Lower leg skin (tissue), 4 donors: ENCODE measurements at regions of chr17 and their contacts with region 1.

Region 1: DNA sequence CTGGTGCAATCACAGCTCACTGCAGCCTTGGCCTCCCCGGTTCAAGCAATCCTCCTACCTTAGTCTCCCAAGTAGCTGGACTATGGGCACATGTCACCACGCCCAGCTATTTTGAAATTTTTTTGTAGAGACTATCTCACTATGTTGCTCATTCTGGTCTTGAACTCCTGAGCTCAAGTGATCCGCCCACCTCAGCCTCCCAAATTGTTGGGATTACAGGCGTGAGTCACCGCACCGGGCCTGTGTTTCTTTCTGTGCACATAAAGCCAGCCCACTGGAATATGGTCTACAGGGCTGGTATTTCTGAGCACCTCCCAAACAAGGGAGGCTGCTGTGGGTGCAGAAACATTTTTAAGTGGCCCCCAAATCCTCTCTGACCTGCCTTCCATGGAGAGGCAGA is 8.4 kb downstream of the TMEM95 start:
- DNase-seq: no peak
- H3K4me3 ChIP-seq: no peak overlapping the region
- CTCF ChIP-seq: no peak
- POLR2A ChIP-seq: no peak

Region 2: GRCh38 chr17:7403977-7404736 is 40.8 kb after region 1 on chr17 and contains the start of gene TMEM256:
- intact Hi-C with region 1: no loop called
- DNase-seq: peak; percentile 99 to 100
- H3K4me3 ChIP-seq: peak within 1 kb of the TSS; percentile 44
- CTCF ChIP-seq: no peak
- POLR2A ChIP-seq: peak in 1 of 2 donors; percentile 60
- total RNA-seq, gene TMEM256: 56.1 to 90.8 (median 65.5) TPM

Region 3: GRCh38 chr17:7419819-7420610 is 56.7 kb after region 1 on chr17 and contains the start of gene SPEM1:
- intact Hi-C with region 1: loop called (anchors 10 kb)
- DNase-seq: no peak
- H3K4me3 ChIP-seq: no peak within 1 kb of the TSS
- CTCF ChIP-seq: no peak
- POLR2A ChIP-seq: no peak
- total RNA-seq, gene SPEM1: not detected